ENCODE measurements at regions of chr1 and their contacts with region 1.

Region 1: DNA sequence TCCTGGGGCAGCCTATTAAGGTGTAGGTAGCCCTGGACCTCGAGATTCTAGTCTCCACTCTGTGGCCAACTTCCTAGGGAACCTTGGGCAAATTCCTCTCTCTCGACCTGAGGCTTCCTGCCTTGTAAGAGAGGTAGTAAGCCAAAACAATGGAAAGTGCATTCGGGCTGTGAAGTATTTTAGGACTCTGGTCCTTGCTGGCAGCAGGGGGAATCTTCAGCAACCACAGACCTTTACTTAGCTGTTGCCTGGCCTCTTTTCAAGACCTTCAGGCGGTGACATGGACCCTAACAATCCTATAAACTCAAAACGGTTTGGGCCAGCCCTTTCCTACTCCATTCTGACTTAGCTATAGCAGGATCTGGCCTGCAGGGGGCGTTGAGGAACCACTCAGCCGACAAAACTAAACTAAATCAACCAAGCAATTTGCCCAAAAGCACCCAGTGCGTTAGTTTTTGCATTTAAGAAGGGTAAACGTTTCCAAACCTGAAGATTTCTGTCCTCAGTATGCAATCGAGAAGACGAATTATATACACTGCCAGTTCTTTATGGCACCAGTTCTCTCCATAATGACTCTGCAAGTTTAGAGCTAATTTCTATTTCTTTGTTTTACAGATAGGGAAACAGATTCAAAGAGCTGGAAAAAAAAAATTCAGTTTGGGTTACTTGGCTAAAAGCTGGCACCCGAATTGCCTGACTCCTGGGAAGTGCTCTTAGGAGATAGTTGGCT is 10.9 kb upstream of the SESN2 start:
- DNase-seq: peak; percentile 50 to 72
- H3K4me3 ChIP-seq: peak overlapping the region; percentile 49; the same call in 1 of the 2 replicates
- H3K27ac ChIP-seq: peak overlapping the region; percentile 100
- H3K4me1 ChIP-seq: peaks cover 31% of the 10 kb centered on the region
- H3K27me3 ChIP-seq: no peaks in the 10 kb centered on the region
- CTCF ChIP-seq: peak; percentile 88

Region 2: GRCh38 chr1:26833432-26834405 is 1414.7 kb before region 1 on chr1:
- CTCF ChIA-PET with region 1: no interaction called
- POLR2A ChIA-PET with region 1: no interaction called
- intact Hi-C with region 1: no loop called
- DNase-seq: no peak
- H3K4me3 ChIP-seq: no peak overlapping the region
- H3K27ac ChIP-seq: no peak overlapping the region
- H3K4me1 ChIP-seq: 0 out of 2 replicates have a peak, but pooled peaks cover under 1% of the 10 kb centered on the region
- H3K27me3 ChIP-seq: no peaks in the 10 kb centered on the region
- CTCF ChIP-seq: no peak

Region 3: DNA sequence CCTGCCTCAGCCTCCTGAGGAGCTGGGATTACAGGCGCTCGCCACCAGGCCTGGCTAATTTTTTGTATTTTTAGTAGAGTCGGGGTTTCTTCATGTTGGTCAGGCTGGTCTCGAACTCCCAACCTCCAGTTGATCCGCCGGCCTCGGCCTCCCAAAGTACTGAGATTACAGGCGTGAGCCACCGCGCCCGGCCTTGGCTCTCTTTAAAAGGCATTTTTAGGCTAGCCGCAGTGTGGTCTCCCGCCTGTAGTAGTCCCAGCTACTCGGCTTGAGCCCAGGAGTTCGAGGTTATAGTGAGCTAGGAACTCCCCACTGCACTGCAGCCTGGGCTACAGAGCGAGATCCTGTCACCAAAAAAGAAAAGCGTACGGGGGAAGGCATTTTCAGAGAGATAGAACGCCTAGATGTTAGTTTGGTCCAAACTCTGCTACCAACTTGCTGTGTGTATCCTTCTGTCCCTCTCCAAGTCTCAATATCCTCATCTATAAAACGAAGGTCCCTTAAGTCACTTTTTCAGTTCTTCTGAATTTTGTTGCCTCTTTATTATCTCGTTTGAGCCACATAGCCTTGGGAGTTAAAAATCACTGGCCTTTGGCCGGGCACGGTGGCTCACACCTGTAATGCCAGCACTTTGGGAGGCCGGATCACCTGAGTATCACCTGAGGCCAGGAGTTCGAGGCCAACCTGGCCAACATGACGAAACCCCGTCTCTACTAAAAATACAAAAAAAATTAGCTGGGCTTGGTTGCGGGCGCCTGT is 81.1 kb after region 1 on chr1:
- CTCF ChIA-PET with region 1: interaction called, 3 read pairs
- POLR2A ChIA-PET with region 1: interaction called, 6 read pairs
- intact Hi-C with region 1: loop called (anchors 2 kb)
- DNase-seq: no peak
- H3K4me3 ChIP-seq: peak overlapping the region; percentile 80
- H3K27ac ChIP-seq: peak overlapping the region; percentile 91
- H3K4me1 ChIP-seq: peaks cover 14% of the 10 kb centered on the region
- H3K27me3 ChIP-seq: no peaks in the 10 kb centered on the region
- CTCF ChIP-seq: no peak

Region 4: GRCh38 chr1:28354121-28354520 is 105.7 kb after region 1 on chr1:
- CTCF ChIA-PET with region 1: interaction called, 7 read pairs
- POLR2A ChIA-PET with region 1: interaction called, 8 read pairs
- intact Hi-C with region 1: loop called (anchors 1 kb)
- DNase-seq: peak in 1 of 2 experiments; percentile 92
- H3K4me3 ChIP-seq: no peak overlapping the region
- H3K27ac ChIP-seq: peak overlapping the region; percentile 90
- H3K4me1 ChIP-seq: peaks cover 40% of the 10 kb centered on the region
- H3K27me3 ChIP-seq: no peaks in the 10 kb centered on the region
- CTCF ChIP-seq: no peak

Region 5: GRCh38 chr1:28437934-28438699 is 189.7 kb after region 1 on chr1:
- CTCF ChIA-PET with region 1: interaction called, 11 read pairs
- POLR2A ChIA-PET with region 1: no interaction called
- intact Hi-C with region 1: no loop called
- DNase-seq: peak; percentile 87 to 93
- H3K4me3 ChIP-seq: peak overlapping the region; percentile 56
- H3K27ac ChIP-seq: peak overlapping the region; percentile 79
- H3K4me1 ChIP-seq: peaks cover 37% of the 10 kb centered on the region
- H3K27me3 ChIP-seq: no peaks in the 10 kb centered on the region
- CTCF ChIP-seq: no peak

Region 6: DNA sequence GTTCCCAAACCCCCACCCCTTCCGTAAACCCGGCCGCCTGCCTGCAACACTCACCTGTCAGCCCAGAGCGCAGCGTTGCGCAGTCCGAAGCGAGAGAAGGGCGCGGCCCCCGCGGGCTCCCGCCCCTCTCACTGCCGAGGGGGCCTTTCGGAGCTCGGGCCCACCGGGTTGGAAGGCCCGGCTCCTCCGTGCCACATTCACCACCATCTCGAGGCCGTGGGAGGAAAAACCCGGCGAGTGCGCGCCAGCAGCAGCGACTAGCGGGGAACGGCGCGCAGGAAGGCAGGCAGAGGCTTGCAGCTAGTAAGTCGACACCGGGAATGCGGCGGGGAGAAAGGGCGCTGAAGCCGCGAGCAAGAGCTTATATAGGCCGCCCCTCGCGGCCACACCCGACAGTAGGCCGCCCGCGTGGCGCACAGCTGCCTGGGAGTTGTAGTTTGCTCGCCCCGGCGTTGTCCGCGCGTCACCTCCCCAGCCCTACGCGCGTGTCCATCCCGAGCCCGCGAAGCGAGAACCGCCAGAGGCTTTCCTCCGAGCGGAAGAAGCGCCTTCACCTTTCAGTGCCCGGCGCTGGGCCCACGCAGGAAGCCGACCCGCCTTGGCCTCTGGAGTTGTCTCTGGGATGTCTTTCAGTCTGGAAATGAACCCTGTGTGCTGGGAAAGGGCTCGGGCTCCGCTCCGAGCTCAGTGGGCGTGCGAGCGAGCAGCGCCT is 333.2 kb after region 1 on chr1:
- CTCF ChIA-PET with region 1: no interaction called
- POLR2A ChIA-PET with region 1: interaction called, 14 read pairs
- intact Hi-C with region 1: no loop called
- DNase-seq: peak; percentile 84 to 93
- H3K4me3 ChIP-seq: peak overlapping the region; percentile 87
- H3K27ac ChIP-seq: peak overlapping the region; percentile 81
- H3K4me1 ChIP-seq: peaks cover 9% of the 10 kb centered on the region
- H3K27me3 ChIP-seq: no peaks in the 10 kb centered on the region
- CTCF ChIP-seq: no peak

Region 7: GRCh38 chr1:28877132-28877781 is 628.8 kb after region 1 on chr1:
- CTCF ChIA-PET with region 1: no interaction called
- POLR2A ChIA-PET with region 1: no interaction called
- intact Hi-C with region 1: loop called (anchors 2 kb)
- DNase-seq: peak; percentile 55 to 76
- H3K4me3 ChIP-seq: no peak overlapping the region
- H3K27ac ChIP-seq: no peak overlapping the region
- H3K4me1 ChIP-seq: 0 out of 2 replicates have a peak, but pooled peaks cover 1% of the 10 kb centered on the region
- H3K27me3 ChIP-seq: no peaks in the 10 kb centered on the region
- CTCF ChIP-seq: peak; percentile 84

Measured in PC-9 (cell line).